ENCODE measurements at regions of chr1 and their contacts with region 1.

Region 1: GRCh38 chr1:154558575-154559465 is at the start of gene UBE2Q1:
- DNase-seq: peak; percentile 99
- H3K4me3 Mint-ChIP-seq: peak within 1 kb of the TSS; percentile 96
- H3K27ac Mint-ChIP-seq: peak within 1 kb of the TSS; percentile 92
- H3K4me1 Mint-ChIP-seq: peaks cover 49% of the 10 kb centered on the region
- H3K27me3 Mint-ChIP-seq: no peaks in the 10 kb centered on the region
- total RNA-seq, gene UBE2Q1: 93.3 and 106 TPM in 2 replicates

Region 2: GRCh38 chr1:154324669-154325582 is 233.9 kb before region 1 on chr1 and contains the start of gene ATP8B2:
- intact Hi-C with region 1: loop called (anchors 2 kb)
- DNase-seq: peak; percentile 74
- H3K4me3 Mint-ChIP-seq: peak within 1 kb of the TSS; percentile 96
- H3K27ac Mint-ChIP-seq: peak within 1 kb of the TSS; percentile 89
- H3K4me1 Mint-ChIP-seq: peaks cover 35% of the 10 kb centered on the region
- H3K27me3 Mint-ChIP-seq: peaks cover 22% of the 10 kb centered on the region
- total RNA-seq, gene ATP8B2: 50.1 and 54.9 TPM in 2 replicates

Region 3: GRCh38 chr1:154627257-154628120 is 68.7 kb after region 1 on chr1:
- intact Hi-C with region 1: loop called (anchors 5 kb)
- DNase-seq: peak; percentile 83
- H3K4me3 Mint-ChIP-seq: peak overlapping the region; percentile 99
- H3K27ac Mint-ChIP-seq: peak overlapping the region; percentile 98
- H3K4me1 Mint-ChIP-seq: peaks cover 51% of the 10 kb centered on the region
- H3K27me3 Mint-ChIP-seq: peaks cover 12% of the 10 kb centered on the region

Region 4: GRCh38 chr1:154760469-154760933 is 201.7 kb after region 1 on chr1:
- intact Hi-C with region 1: loop called (anchors 1 kb)
- DNase-seq: peak; percentile 76
- H3K4me3 Mint-ChIP-seq: peak overlapping the region; percentile 70
- H3K27ac Mint-ChIP-seq: peak overlapping the region; percentile 88
- H3K4me1 Mint-ChIP-seq: peaks cover 53% of the 10 kb centered on the region
- H3K27me3 Mint-ChIP-seq: peaks cover 14% of the 10 kb centered on the region

Region 5: DNA sequence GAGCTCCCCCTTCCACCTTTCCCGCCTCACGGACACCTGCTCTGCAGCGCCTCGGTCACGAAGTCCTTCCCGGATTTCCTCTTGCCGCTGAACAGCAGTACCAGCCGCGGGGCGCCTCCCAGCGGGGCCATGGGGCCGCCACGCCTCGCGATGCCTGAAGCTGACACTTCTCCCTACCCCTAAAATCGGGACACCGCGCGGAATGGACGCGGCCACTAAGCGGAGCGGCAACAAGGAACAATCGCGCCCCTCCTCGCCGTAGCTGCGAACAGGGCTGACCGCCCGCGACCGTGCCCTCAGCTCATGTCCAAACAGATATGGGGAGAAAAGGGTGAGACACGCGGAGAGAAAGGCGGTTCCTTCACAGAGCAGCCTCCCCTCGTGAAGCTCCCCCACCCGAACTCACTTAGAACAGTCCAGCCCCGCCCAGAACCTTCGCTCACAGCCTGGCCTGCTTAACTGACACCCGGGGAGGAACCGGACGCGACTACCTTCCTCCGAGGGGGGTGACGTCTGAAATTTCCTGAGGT is 377.8 kb after region 1 on chr1 and contains the start of gene PMVK:
- intact Hi-C with region 1: loop called (anchors 1 kb)
- DNase-seq: peak; percentile 92
- H3K4me3 Mint-ChIP-seq: peak within 1 kb of the TSS; percentile 93
- H3K27ac Mint-ChIP-seq: peak within 1 kb of the TSS; percentile 95
- H3K4me1 Mint-ChIP-seq: peaks cover 53% of the 10 kb centered on the region
- H3K27me3 Mint-ChIP-seq: no peaks in the 10 kb centered on the region
- total RNA-seq, gene PMVK: 42.5 and 43.3 TPM in 2 replicates

Region 6: GRCh38 chr1:154982897-154983648 is 424.3 kb after region 1 on chr1 and contains the start of gene FLAD1:
- intact Hi-C with region 1: loop called (anchors 1 kb)
- DNase-seq: peak; percentile 96
- H3K4me3 Mint-ChIP-seq: no peak within 1 kb of the TSS
- H3K27ac Mint-ChIP-seq: peak within 1 kb of the TSS; percentile 42
- H3K4me1 Mint-ChIP-seq: peaks cover 8% of the 10 kb centered on the region
- H3K27me3 Mint-ChIP-seq: no peaks in the 10 kb centered on the region
- total RNA-seq, gene FLAD1: 69.2 and 74.3 TPM in 2 replicates

Region 7: GRCh38 chr1:155084722-155085503 is 526.1 kb after region 1 on chr1:
- intact Hi-C with region 1: loop called (anchors 2 kb)
- DNase-seq: peak; percentile 89
- H3K4me3 Mint-ChIP-seq: peak overlapping the region; percentile 88
- H3K27ac Mint-ChIP-seq: peak overlapping the region; percentile 94
- H3K4me1 Mint-ChIP-seq: peaks cover 34% of the 10 kb centered on the region
- H3K27me3 Mint-ChIP-seq: peaks cover 31% of the 10 kb centered on the region